ENCODE measurements at regions of chr5 and their contacts with region 1.

Region 1: GRCh38 chr5:72307968-72308852 is 11.8 kb downstream of the MRPS27 start:
- DNase-seq: peak; percentile 97 to 99
- ATAC-seq: peak; percentile 98 to 99 (median 99)
- H3K4me3 ChIP-seq: peak overlapping the region; percentile 85
- H3K27ac ChIP-seq: peak overlapping the region; percentile 97
- H3K4me1 ChIP-seq: peaks cover 7% of the 10 kb centered on the region
- H3K27me3 ChIP-seq: no peaks in the 10 kb centered on the region
- CTCF ChIP-seq: peak; percentile 88

Region 2: GRCh38 chr5:72138943-72139521 is 169.2 kb before region 1 on chr5:
- intact Hi-C with region 1: loop called (anchors 1 to 5 kb)
- DNase-seq: no peak
- ATAC-seq: no peak
- H3K4me3 ChIP-seq: no peak overlapping the region
- H3K27ac ChIP-seq: no peak overlapping the region
- H3K4me1 ChIP-seq: no peaks in the 10 kb centered on the region
- H3K27me3 ChIP-seq: no peaks in the 10 kb centered on the region
- CTCF ChIP-seq: no peak

Region 3: GRCh38 chr5:72347801-72348305 is 39.6 kb after region 1 on chr5:
- intact Hi-C with region 1: no loop called
- DNase-seq: no peak
- ATAC-seq: no peak
- H3K4me3 ChIP-seq: no peak overlapping the region
- H3K27ac ChIP-seq: no peak overlapping the region
- H3K4me1 ChIP-seq: no peaks in the 10 kb centered on the region
- H3K27me3 ChIP-seq: no peaks in the 10 kb centered on the region
- CTCF ChIP-seq: no peak

Measured in psoas muscle (tissue), 8 donors.